Gastrocnemius medialis (tissue), 4 donors: ENCODE measurements at regions of chr15 and their contacts with region 1.

Region 1: DNA sequence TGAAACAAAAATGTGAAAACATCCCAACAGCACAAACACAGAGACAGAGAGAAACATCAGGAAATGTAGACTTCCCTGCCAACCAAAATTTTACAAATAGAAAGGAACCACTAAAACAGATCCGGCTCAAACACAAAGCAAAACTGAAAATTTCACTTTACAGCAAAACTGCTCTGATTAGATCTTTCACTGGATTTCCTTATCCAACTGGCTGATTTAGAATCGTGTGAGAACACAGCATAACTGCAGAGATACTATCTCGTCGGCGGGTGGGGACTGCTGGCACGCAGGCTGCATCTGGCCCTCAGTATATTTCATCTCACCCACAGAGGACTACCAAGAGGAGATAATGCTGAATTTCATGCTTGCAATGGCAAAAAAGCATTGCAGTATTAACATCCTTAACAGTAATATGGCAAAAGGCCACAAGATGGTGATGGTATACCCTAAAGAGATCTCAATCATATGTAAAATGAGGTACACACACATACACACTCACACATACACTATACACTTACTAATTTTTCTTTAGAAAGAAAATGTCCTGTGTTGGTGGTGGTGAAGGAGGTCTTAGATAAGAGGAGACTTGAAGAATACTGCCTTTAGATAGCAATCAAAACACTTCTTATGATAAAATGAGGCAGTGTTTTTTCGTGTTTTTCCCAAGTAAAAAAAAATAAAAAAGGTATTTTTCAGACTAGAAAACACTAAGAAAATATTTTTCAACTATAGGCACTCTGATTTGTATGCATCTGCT is 10.6 kb upstream of the LEO1 start:
- DNase-seq: no peak
- ATAC-seq: peak; percentile 48 to 64
- H3K4me3 ChIP-seq: peak overlapping the region in 3 of 4 donors; percentile 16 to 33 (median 26)
- H3K27ac ChIP-seq: peak overlapping the region in 3 of 4 donors; percentile 54 to 72 (median 63)
- H3K4me1 ChIP-seq: peaks cover 13 to 17% of the 10 kb centered on the region in 2 donors
- H3K27me3 ChIP-seq: no peaks in the 10 kb centered on the region
- CTCF ChIP-seq: peak; percentile 18 to 44 (median 37)
- POLR2A ChIP-seq: no peak

Region 2: DNA sequence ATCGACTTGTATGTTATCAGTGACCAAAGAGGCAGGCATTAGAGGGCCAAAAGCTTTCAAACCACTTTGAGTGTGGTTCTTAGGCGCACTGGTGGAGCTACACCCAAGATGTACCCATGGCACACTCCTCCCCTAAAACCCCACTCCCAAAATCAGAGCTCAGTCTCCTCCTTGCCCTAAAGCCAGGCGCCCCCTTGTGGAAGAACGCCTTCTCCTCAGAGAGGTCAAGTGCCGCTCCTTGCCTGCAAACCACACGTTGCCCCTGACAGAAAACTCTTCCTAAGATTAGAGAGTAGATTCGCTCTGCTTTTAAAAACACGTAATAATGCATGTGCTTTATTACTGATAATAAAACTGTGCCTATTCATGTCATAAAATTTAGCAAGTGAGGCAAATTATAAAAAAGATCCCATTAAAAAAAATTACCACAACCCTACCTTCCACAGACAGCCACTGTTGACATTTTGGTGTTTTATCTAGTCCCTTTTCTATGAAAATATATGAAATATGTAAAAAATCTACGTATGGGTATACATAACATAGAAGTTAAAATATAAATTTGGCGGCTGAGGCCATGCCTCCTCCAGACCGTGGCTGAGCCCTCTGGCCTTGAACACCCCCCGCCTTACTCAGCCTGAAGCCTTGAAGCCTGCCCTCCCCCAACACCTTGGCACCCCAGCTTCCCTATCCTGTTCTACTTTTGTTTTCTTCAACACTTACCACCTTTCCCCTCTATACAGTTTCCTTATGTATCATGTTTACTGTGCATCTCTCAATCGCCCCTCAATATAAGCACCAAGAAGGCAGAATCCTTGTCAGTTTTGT is 96.9 kb after region 1 on chr15:
- in situ Hi-C with region 1: loop called in 3 of 4 experiments (anchors 10 to 25 kb)
- intact Hi-C with region 1: loop called (anchors 1 kb)
- DNase-seq: peak; percentile 55 to 67
- ATAC-seq: peak; percentile 60 to 87
- H3K4me3 ChIP-seq: no peak overlapping the region
- H3K27ac ChIP-seq: no peak overlapping the region
- H3K4me1 ChIP-seq: no peaks in the 10 kb centered on the region
- H3K27me3 ChIP-seq: no peaks in the 10 kb centered on the region
- CTCF ChIP-seq: peak; percentile 64 to 85 (median 78)
- POLR2A ChIP-seq: no peak